Activated naive CD4-positive, alpha-beta T cell treated with anti-CD3 and anti-CD28 coated beads for 36 hours (primary cell): ENCODE measurements at regions of chr19 and their contacts with region 1.

Region 1: GRCh38 chr19:20077791-20078463 is at the start of gene ZNF90:
- DNase-seq: peak; percentile 98
- H3K4me3 Mint-ChIP-seq: peak within 1 kb of the TSS; percentile 97
- H3K27ac Mint-ChIP-seq: peak within 1 kb of the TSS; percentile 63
- H3K4me1 Mint-ChIP-seq: peaks cover 9% of the 10 kb centered on the region
- H3K27me3 Mint-ChIP-seq: no peaks in the 10 kb centered on the region
- total RNA-seq, gene ZNF90: 15.5 to 17.6 TPM

Region 2: GRCh38 chr19:20051841-20052768 is 25.8 kb before region 1 on chr19:
- CTCF ChIA-PET with region 1: interaction called, 3 read pairs
- intact Hi-C with region 1: loop called (anchors 1 kb)
- DNase-seq: peak; percentile 87
- H3K4me3 Mint-ChIP-seq: peak overlapping the region; percentile 95
- H3K27ac Mint-ChIP-seq: peak overlapping the region; percentile 86
- H3K4me1 Mint-ChIP-seq: peaks cover 6% of the 10 kb centered on the region
- H3K27me3 Mint-ChIP-seq: no peaks in the 10 kb centered on the region

Region 3: GRCh38 chr19:20167020-20167644 is 89.2 kb after region 1 on chr19 and contains the start of gene ZNF486:
- CTCF ChIA-PET with region 1: no interaction called
- intact Hi-C with region 1: loop called (anchors 1 kb)
- DNase-seq: peak; percentile 98
- H3K4me3 Mint-ChIP-seq: peak within 1 kb of the TSS; percentile 98
- H3K27ac Mint-ChIP-seq: peak within 1 kb of the TSS; percentile 91
- H3K4me1 Mint-ChIP-seq: peaks cover 19% of the 10 kb centered on the region
- H3K27me3 Mint-ChIP-seq: no peaks in the 10 kb centered on the region
- total RNA-seq, gene ZNF486: 11.3 to 13.2 TPM